ENCODE measurements at regions of chr6 and their contacts with region 1.

Region 1: GRCh38 chr6:28838634-28839442 is 84.9 kb downstream of the TRIM27 start:
- DNase-seq: peak; percentile 58 to 90 (median 74)
- ATAC-seq: peak; percentile 62
- H3K4me3 ChIP-seq: peak overlapping the region; percentile 65
- H3K4me3 Mint-ChIP-seq: peak overlapping the region; percentile 76
- H3K27ac ChIP-seq: peak overlapping the region; percentile 12 to 38
- H3K27ac Mint-ChIP-seq: peak overlapping the region; percentile 96
- H3K4me1 ChIP-seq: peaks cover 14% of the 10 kb centered on the region
- H3K4me1 Mint-ChIP-seq: peaks cover 22% of the 10 kb centered on the region
- H3K27me3 ChIP-seq: peaks cover 3 to 22% of the 10 kb centered on the region in 2 experiments
- H3K27me3 Mint-ChIP-seq: peaks cover 49% of the 10 kb centered on the region
- CTCF ChIP-seq: peak; percentile 77

Region 2: DNA sequence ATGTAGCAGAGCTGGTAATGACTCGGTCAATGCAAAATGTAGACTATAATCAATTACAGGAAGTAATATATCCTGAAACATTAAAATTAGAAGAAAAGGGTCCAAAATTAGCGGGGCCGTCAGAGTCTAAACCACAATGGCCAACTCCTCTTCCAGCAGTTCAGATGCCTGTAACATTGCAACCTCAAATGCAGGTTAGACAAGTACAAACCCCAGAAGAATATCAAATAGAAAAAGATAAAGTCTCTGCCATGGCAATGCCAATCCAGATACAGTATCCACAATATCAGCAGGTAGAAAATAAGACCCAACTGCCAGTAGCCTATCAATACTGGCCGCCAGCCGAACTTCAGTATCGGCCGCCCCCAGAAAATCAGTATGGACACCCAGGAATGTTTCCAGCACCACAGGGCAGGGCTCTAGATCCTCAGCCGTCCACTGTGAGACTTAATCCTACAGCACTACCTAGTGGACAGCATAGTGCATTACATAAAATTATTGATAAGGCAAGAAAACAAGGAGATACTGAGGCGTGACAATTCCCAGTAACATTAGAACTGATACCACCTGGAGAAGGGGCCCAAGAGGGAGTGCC is 154.8 kb before region 1 on chr6:
- CTCF ChIA-PET with region 1: no interaction called
- POLR2A ChIA-PET with region 1: no interaction called
- intact Hi-C with region 1: loop called (anchors 5 kb)
- DNase-seq: peak in 6 of 14 experiments; percentile 0 to 65 (median 33)
- ATAC-seq: peak; percentile 69
- H3K4me3 ChIP-seq: no peak overlapping the region
- H3K4me3 Mint-ChIP-seq: no peak overlapping the region
- H3K27ac ChIP-seq: no peak overlapping the region
- H3K27ac Mint-ChIP-seq: no peak overlapping the region
- H3K4me1 ChIP-seq: peaks cover 4% of the 10 kb centered on the region
- H3K4me1 Mint-ChIP-seq: peaks cover 12% of the 10 kb centered on the region
- H3K27me3 ChIP-seq: peaks cover 21 to 48% of the 10 kb centered on the region in 2 experiments
- H3K27me3 Mint-ChIP-seq: peaks cover 87% of the 10 kb centered on the region
- CTCF ChIP-seq: peak; percentile 65

Region 3: DNA sequence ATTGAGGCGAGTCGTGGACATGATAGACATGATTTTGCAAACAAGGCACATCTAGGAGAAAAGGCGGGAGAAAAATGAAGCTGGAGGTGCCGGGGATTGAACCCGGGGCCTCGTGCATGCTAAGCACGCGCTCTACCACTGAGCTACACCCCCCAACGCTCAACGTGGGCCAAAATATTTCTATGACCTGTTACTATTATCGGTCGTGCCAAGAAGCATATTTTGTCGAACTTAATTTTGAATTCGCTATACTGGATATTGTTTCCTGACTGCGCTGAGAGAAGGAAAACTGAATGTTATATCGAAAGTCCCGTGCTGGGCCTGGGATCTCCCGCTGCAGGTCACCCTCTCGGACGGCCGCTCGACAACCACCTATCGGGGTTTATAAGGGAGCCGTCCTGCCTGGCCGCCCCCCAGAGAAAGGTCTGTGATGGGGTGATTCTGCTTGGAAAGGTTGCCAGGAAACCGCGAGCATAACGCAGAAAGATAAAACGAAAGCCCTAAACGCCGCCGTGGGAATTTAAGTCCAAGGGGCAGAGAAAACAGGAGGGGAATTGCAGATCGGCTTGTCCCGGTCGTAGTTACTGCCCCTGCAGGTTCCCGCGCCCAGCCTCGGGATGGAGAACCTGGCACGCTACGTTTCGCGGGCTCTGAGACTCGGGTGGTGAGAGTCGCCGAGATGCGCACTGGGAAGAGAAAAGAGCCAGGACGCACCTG is 24.9 kb after region 1 on chr6:
- CTCF ChIA-PET with region 1: interaction called, 12 read pairs
- POLR2A ChIA-PET with region 1: interaction called, 42 read pairs
- intact Hi-C with region 1: loop called (anchors 1 to 2 kb)
- DNase-seq: peak; percentile 69 to 93 (median 80)
- ATAC-seq: peak; percentile 39
- H3K4me3 ChIP-seq: peak overlapping the region; percentile 82
- H3K4me3 Mint-ChIP-seq: peak overlapping the region; percentile 88
- H3K27ac ChIP-seq: peak overlapping the region; percentile 30 to 47
- H3K27ac Mint-ChIP-seq: peak overlapping the region; percentile 93
- H3K4me1 ChIP-seq: peaks cover 34% of the 10 kb centered on the region
- H3K4me1 Mint-ChIP-seq: peaks cover 51% of the 10 kb centered on the region
- H3K27me3 ChIP-seq: no peaks in the 10 kb centered on the region
- H3K27me3 Mint-ChIP-seq: peaks cover 7% of the 10 kb centered on the region
- CTCF ChIP-seq: peak; percentile 10

Region 4: DNA sequence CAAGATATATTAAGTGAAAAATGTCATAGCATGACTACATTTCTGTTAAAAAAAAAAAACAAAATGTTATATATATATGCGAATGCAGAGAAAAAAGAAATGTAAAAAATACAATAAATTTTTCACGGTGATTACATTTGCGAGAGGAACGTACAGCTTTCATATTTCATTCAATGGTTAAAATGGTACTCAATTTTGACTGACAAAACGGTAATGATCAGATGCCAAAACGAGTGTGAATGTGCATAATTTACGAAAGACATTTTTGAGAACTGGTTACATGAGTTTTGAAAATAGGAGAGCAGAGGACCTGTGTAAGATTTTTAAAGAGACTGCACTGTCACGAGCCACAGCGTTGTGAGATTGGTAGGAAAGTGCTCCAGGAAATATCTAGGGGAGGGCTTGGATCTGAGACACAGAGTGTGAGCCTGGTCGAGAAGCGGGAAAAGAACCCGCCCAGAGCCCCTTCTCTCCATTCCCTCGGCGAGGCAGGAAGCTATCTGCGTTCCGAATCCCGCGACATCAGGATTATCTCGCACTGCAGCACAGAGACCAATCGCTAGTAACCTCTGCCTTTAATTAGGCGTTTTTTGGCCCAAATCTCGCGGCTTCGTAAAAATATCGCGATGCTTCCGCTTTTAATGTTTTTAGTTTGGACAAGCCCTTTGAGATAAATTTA is 56.4 kb after region 1 on chr6:
- CTCF ChIA-PET with region 1: interaction called, 10 read pairs
- POLR2A ChIA-PET with region 1: interaction called, 23 read pairs
- intact Hi-C with region 1: loop called (anchors 1 to 2 kb)
- DNase-seq: peak; percentile 81 to 97 (median 88)
- ATAC-seq: peak; percentile 70
- H3K4me3 ChIP-seq: peak overlapping the region; percentile 78
- H3K4me3 Mint-ChIP-seq: peak overlapping the region; percentile 100
- H3K27ac ChIP-seq: peak overlapping the region; percentile 95 to 96
- H3K27ac Mint-ChIP-seq: peak overlapping the region; percentile 100
- H3K4me1 ChIP-seq: peaks cover 12% of the 10 kb centered on the region
- H3K4me1 Mint-ChIP-seq: peaks cover 27% of the 10 kb centered on the region
- H3K27me3 ChIP-seq: no peaks in the 10 kb centered on the region
- H3K27me3 Mint-ChIP-seq: peaks cover 14% of the 10 kb centered on the region
- CTCF ChIP-seq: no peak

Region 5: DNA sequence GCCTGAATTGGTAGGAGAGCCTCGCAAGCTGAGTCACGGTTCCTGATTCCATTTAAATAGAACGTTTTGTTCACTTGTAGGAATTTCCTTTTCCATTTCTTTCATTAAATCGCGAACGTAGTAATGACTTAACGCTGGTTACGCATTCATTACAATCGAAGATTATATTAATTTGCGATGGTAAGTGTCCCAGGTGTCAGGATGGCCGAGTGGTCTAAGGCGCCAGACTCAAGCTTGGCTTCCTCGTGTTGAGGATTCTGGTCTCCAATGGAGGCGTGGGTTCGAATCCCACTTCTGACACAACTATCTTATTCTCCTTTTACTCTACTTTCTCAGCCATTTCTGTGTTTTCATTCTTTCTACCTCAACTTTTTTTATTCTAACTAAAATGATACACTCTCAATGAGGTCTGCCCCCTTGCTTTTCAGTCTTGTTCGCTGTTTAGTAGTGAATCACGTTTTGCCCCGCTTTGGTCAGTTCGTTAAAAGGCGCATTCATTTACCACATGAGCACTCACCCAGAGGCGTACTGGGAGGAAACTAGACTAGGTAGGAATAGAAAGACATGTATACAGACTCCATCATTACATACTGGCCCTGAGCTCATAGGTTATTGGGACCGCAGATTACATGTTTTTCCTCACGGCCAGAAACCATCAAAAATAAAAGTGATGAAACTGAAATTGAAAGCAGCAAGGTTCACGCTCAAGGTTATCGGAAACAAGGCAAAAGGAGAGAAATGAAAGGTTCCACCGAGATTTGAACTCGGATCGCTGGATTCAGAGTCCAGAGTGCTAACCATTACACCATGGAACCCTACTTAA is 102.2 kb after region 1 on chr6:
- CTCF ChIA-PET with region 1: interaction called, 7 read pairs
- POLR2A ChIA-PET with region 1: interaction called, 23 read pairs
- intact Hi-C with region 1: loop called (anchors 1 to 2 kb)
- DNase-seq: peak; percentile 49 to 93 (median 67)
- ATAC-seq: peak; percentile 68
- H3K4me3 ChIP-seq: peak overlapping the region; percentile 66
- H3K4me3 Mint-ChIP-seq: peak overlapping the region; percentile 92
- H3K27ac ChIP-seq: peak overlapping the region; percentile 55 to 63
- H3K27ac Mint-ChIP-seq: peak overlapping the region; percentile 92
- H3K4me1 ChIP-seq: peaks cover 42% of the 10 kb centered on the region
- H3K4me1 Mint-ChIP-seq: peaks cover 55% of the 10 kb centered on the region
- H3K27me3 ChIP-seq: no peaks in the 10 kb centered on the region
- H3K27me3 Mint-ChIP-seq: peaks cover 21% of the 10 kb centered on the region
- CTCF ChIP-seq: no peak

Region 6: DNA sequence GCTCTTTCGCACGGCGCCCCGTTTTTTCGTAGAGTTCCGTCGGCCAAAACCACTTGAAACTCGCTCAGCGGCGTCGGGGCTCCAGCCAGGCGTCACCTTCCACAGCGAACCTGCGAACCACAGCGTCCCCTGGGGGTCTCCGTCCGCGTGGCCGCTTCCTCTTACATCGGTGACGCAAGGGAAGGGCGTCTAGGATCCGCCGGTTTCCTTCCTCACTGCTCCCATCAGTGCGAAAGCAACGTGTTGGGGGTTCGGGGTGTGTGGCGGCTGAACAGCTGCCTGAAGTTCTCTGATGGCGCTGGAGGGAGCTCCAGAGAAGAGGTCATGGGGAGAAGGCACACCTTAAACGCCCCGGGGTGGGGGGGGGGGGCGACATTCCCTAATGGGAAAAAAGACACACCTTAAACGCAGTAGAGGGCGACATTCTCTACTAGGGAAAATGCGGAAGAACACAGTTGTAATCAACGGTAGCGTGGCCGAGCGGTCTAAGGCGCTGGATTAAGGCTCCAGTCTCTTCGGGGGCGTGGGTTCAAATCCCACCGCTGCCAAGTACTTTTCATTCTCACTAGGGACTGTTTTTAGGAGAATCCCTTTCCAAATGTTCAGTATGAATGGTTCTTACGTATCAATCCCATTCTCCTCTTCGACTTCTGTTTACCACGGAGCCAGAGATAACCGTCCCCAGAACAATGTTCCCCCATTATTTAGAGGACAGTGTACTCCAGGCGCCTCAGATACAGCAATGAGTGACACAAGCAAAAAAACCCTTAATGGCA is 149.9 kb after region 1 on chr6:
- CTCF ChIA-PET with region 1: interaction called, 15 read pairs
- POLR2A ChIA-PET with region 1: interaction called, 3 read pairs
- intact Hi-C with region 1: loop called (anchors 2 to 10 kb)
- DNase-seq: peak; percentile 49 to 90 (median 70)
- ATAC-seq: peak; percentile 90
- H3K4me3 ChIP-seq: peak overlapping the region; percentile 38
- H3K4me3 Mint-ChIP-seq: peak overlapping the region; percentile 89
- H3K27ac ChIP-seq: no peak overlapping the region
- H3K27ac Mint-ChIP-seq: peak overlapping the region; percentile 84
- H3K4me1 ChIP-seq: peaks cover 17% of the 10 kb centered on the region
- H3K4me1 Mint-ChIP-seq: peaks cover 35% of the 10 kb centered on the region
- H3K27me3 ChIP-seq: peaks cover 0 to 13% of the 10 kb centered on the region in 2 experiments
- H3K27me3 Mint-ChIP-seq: peaks cover 50% of the 10 kb centered on the region
- CTCF ChIP-seq: peak; percentile 51

Region 7: GRCh38 chr6:29589423-29590048 is 750.7 kb after region 1 on chr6:
- CTCF ChIA-PET with region 1: no interaction called
- POLR2A ChIA-PET with region 1: no interaction called
- intact Hi-C with region 1: loop called (anchors 2 to 5 kb)
- DNase-seq: peak; percentile 28 to 77 (median 39)
- ATAC-seq: peak; percentile 85
- H3K4me3 ChIP-seq: no peak overlapping the region
- H3K4me3 Mint-ChIP-seq: no peak overlapping the region
- H3K27ac ChIP-seq: no peak overlapping the region
- H3K27ac Mint-ChIP-seq: no peak overlapping the region
- H3K4me1 ChIP-seq: no peaks in the 10 kb centered on the region
- H3K4me1 Mint-ChIP-seq: no peaks in the 10 kb centered on the region
- H3K27me3 ChIP-seq: peaks cover 3 to 11% of the 10 kb centered on the region in 2 experiments
- H3K27me3 Mint-ChIP-seq: peaks cover 33% of the 10 kb centered on the region
- CTCF ChIP-seq: peak; percentile 99